CD4-positive, alpha-beta memory T cell (primary cell): ENCODE measurements at regions of chr21 and their contacts with region 1.

Region 1: GRCh38 chr21:39183237-39184007 is at the start of gene PSMG1:
- DNase-seq: peak; percentile 92 to 94 (median 93)
- H3K4me3 ChIP-seq: peak within 1 kb of the TSS; percentile 79 to 85
- H3K4me3 Mint-ChIP-seq: peak within 1 kb of the TSS; percentile 95 to 100 (median 98)
- H3K27ac ChIP-seq: peak within 1 kb of the TSS; percentile 84
- H3K27ac Mint-ChIP-seq: peak within 1 kb of the TSS; percentile 95 to 98 (median 97)
- H3K4me1 ChIP-seq: peaks cover 30% of the 10 kb centered on the region
- H3K4me1 Mint-ChIP-seq: peaks cover 34 to 79% (median 48%) of the 10 kb centered on the region in 4 donors
- H3K27me3 ChIP-seq: no peaks in the 10 kb centered on the region
- H3K27me3 Mint-ChIP-seq: no peaks in the 10 kb centered on the region
- total RNA-seq, gene PSMG1: 17.2 to 19.9 TPM

Region 2: GRCh38 chr21:38669176-38669575 is 514.2 kb before region 1 on chr21:
- CTCF ChIA-PET with region 1: no interaction called
- POLR2A ChIA-PET with region 1: no interaction called
- intact Hi-C with region 1: no loop called
- DNase-seq: no peak
- H3K4me3 ChIP-seq: no peak overlapping the region
- H3K4me3 Mint-ChIP-seq: no peak overlapping the region
- H3K27ac ChIP-seq: no peak overlapping the region
- H3K27ac Mint-ChIP-seq: no peak overlapping the region
- H3K4me1 ChIP-seq: no peaks in the 10 kb centered on the region
- H3K4me1 Mint-ChIP-seq: no peaks in the 10 kb centered on the region
- H3K27me3 ChIP-seq: no peaks in the 10 kb centered on the region
- H3K27me3 Mint-ChIP-seq: peaks cover 10 to 17% of the 10 kb centered on the region in 2 donors

Region 3: GRCh38 chr21:38766987-38767722 is 416.3 kb before region 1 on chr21:
- CTCF ChIA-PET with region 1: interaction called, 4 read pairs
- POLR2A ChIA-PET with region 1: interaction called, 12 read pairs
- intact Hi-C with region 1: loop called (anchors 10 kb)
- DNase-seq: peak; percentile 69 to 80 (median 74)
- H3K4me3 ChIP-seq: peak overlapping the region; percentile 63 to 71
- H3K4me3 Mint-ChIP-seq: peak overlapping the region; percentile 85 to 96 (median 92)
- H3K27ac ChIP-seq: peak overlapping the region; percentile 72
- H3K27ac Mint-ChIP-seq: peak overlapping the region; percentile 86 to 96 (median 91)
- H3K4me1 ChIP-seq: peaks cover 27% of the 10 kb centered on the region
- H3K4me1 Mint-ChIP-seq: peaks cover 22 to 35% (median 31%) of the 10 kb centered on the region in 4 donors
- H3K27me3 ChIP-seq: no peaks in the 10 kb centered on the region
- H3K27me3 Mint-ChIP-seq: no peaks in the 10 kb centered on the region

Region 4: GRCh38 chr21:38805328-38806152 is 377.9 kb before region 1 on chr21 and contains the start of gene ETS2:
- CTCF ChIA-PET with region 1: interaction called, 3 read pairs
- POLR2A ChIA-PET with region 1: no interaction called
- intact Hi-C with region 1: loop called (anchors 1 kb)
- DNase-seq: peak; percentile 59 to 79 (median 65)
- H3K4me3 ChIP-seq: peak within 1 kb of the TSS; percentile 62 to 82
- H3K4me3 Mint-ChIP-seq: peak within 1 kb of the TSS; percentile 87 to 94 (median 90)
- H3K27ac ChIP-seq: peak within 1 kb of the TSS; percentile 59
- H3K27ac Mint-ChIP-seq: peak within 1 kb of the TSS; percentile 65 to 95 (median 83)
- H3K4me1 ChIP-seq: peaks cover 32% of the 10 kb centered on the region
- H3K4me1 Mint-ChIP-seq: peaks cover 24 to 35% (median 30%) of the 10 kb centered on the region in 4 donors
- H3K27me3 ChIP-seq: no peaks in the 10 kb centered on the region
- H3K27me3 Mint-ChIP-seq: no peaks in the 10 kb centered on the region
- total RNA-seq, gene ETS2: 14.6 to 15.2 TPM

Region 5: GRCh38 chr21:39313571-39314142 is 130.2 kb after region 1 on chr21 and contains the start of gene BRWD1:
- CTCF ChIA-PET with region 1: interaction called, 9 read pairs
- POLR2A ChIA-PET with region 1: interaction called, 40 read pairs
- intact Hi-C with region 1: loop called (anchors 1 kb)
- DNase-seq: peak; percentile 80 to 87 (median 86)
- H3K4me3 ChIP-seq: peak within 1 kb of the TSS; percentile 33 to 85
- H3K4me3 Mint-ChIP-seq: peak within 1 kb of the TSS; percentile 85 to 95 (median 92)
- H3K27ac ChIP-seq: peak within 1 kb of the TSS; percentile 74
- H3K27ac Mint-ChIP-seq: peak within 1 kb of the TSS; percentile 92 to 99 (median 95)
- H3K4me1 ChIP-seq: peaks cover 35% of the 10 kb centered on the region
- H3K4me1 Mint-ChIP-seq: peaks cover 33 to 53% (median 40%) of the 10 kb centered on the region in 4 donors
- H3K27me3 ChIP-seq: no peaks in the 10 kb centered on the region
- H3K27me3 Mint-ChIP-seq: peaks cover 0 to 2% of the 10 kb centered on the region in 2 donors
- total RNA-seq, gene BRWD1: 92.9 to 99.0 TPM

Region 6: GRCh38 chr21:39349211-39350093 is 166.0 kb after region 1 on chr21:
- CTCF ChIA-PET with region 1: no interaction called
- POLR2A ChIA-PET with region 1: interaction called, 24 read pairs
- intact Hi-C with region 1: loop called (anchors 1 kb)
- DNase-seq: peak; percentile 96 to 97 (median 96)
- H3K4me3 ChIP-seq: peak overlapping the region; percentile 58 to 99
- H3K4me3 Mint-ChIP-seq: peak overlapping the region; percentile 92 to 98 (median 96)
- H3K27ac ChIP-seq: peak overlapping the region; percentile 84
- H3K27ac Mint-ChIP-seq: peak overlapping the region; percentile 98 to 99 (median 98)
- H3K4me1 ChIP-seq: peaks cover 45% of the 10 kb centered on the region
- H3K4me1 Mint-ChIP-seq: peaks cover 26 to 52% (median 33%) of the 10 kb centered on the region in 4 donors
- H3K27me3 ChIP-seq: no peaks in the 10 kb centered on the region
- H3K27me3 Mint-ChIP-seq: peaks cover 2% of the 10 kb centered on the region in 2 donors

Region 7: GRCh38 chr21:39379986-39380891 is 196.8 kb after region 1 on chr21:
- CTCF ChIA-PET with region 1: no interaction called
- POLR2A ChIA-PET with region 1: interaction called, 10 read pairs
- intact Hi-C with region 1: loop called (anchors 1 kb)
- DNase-seq: peak; percentile 85 to 92 (median 88)
- H3K4me3 ChIP-seq: peak overlapping the region; percentile 70 to 99
- H3K4me3 Mint-ChIP-seq: peak overlapping the region; percentile 91 to 97 (median 94)
- H3K27ac ChIP-seq: peak overlapping the region; percentile 81
- H3K27ac Mint-ChIP-seq: peak overlapping the region; percentile 91 to 97 (median 93)
- H3K4me1 ChIP-seq: peaks cover 23% of the 10 kb centered on the region
- H3K4me1 Mint-ChIP-seq: peaks cover 13 to 34% (median 26%) of the 10 kb centered on the region in 4 donors
- H3K27me3 ChIP-seq: no peaks in the 10 kb centered on the region
- H3K27me3 Mint-ChIP-seq: peaks cover under 1 to 3% of the 10 kb centered on the region in 2 donors